GM10248 (cell line): ENCODE measurements at regions of chr11 and their contacts with region 1.

Region 1: GRCh38 chr11:94183886-94184264 is 55.2 kb downstream of the PANX1 start:
- DNase-seq: peak; percentile 23
- CTCF ChIP-seq: peak; percentile 67

Region 2: GRCh38 chr11:94171693-94172440 is 12.0 kb before region 1 on chr11:
- CTCF ChIA-PET with region 1: interaction called, 56 read pairs
- POLR2A ChIA-PET with region 1: no interaction called
- DNase-seq: peak; percentile 46
- CTCF ChIP-seq: peak; percentile 82

Region 3: DNA sequence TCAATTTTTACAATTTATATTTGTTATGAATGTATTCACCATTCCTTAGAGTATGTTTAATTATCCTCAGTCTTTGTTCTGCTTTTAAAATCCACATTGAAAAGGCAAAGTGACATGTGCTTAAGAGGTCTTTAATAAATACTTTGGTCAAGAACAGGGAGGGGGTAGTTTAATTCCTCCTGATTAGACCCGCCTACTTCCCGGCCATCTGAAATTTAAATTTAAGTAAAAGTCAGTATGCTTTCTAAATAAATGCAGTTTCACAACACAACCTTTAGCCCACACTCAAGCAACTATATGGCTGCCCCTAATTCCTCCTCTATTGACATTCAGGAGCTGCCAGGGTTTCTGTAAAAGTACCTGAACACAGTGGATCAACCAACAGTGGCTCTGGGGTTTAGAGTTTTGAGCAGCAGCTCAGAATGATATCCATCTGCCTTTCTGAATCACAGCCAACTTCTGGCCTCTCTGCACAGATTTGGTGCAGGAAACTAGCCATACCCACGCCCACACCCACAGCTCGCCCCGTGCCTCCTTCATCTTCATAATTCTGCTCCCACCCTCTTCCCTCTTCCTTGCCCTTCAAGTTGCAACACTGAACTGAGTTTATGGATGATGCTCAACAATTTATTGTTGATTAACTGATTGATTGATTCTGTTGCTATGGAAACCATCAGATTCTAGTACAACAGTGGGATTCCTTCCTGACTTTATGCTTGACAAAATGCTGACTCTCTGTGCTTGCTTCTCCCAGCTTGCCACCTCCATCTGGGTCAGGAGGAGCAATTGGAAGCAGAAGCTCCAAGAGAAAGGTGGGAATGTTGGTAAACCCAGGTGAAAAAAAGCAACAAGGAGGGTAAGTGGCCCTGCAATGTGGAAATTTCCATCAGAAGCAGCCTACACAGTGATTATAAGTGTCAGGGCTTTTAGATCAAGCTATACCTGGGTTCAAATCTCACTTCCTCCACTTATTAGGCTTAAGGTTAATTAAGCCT is 15.6 kb after region 1 on chr11:
- CTCF ChIA-PET with region 1: interaction called, 27 read pairs
- POLR2A ChIA-PET with region 1: no interaction called
- DNase-seq: no peak
- CTCF ChIP-seq: no peak

Region 4: GRCh38 chr11:94211261-94211830 is 27.5 kb after region 1 on chr11:
- CTCF ChIA-PET with region 1: interaction called, 12 read pairs
- POLR2A ChIA-PET with region 1: no interaction called
- DNase-seq: no peak
- CTCF ChIP-seq: no peak

Region 5: DNA sequence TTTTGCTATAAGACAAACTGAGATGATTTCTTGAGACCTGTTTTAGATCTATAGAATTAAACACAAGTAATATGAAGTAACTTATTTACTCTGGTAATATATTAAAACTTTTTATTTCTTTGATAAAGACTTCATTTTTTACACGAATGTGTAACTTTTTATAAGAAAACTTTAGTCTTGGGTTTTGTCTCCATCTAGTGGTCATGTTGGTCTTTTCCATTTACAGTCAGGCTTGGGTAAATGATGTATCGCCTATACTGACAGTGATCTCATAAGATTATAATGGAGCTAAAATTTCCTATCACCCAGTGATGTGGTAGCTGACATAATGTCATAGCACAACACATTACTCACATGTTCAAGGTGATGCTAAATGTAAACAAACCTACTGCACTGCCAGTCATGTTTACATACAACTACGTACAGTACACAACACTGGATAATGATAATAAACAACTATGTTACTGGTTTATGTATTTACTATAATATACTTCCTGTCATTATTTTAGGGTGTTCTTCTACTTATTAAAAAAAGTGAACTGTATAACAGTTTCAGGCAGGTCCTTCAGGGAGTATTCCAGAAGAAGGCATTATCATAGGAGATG is 320.9 kb after region 1 on chr11:
- CTCF ChIA-PET with region 1: interaction called, 36 read pairs
- POLR2A ChIA-PET with region 1: no interaction called
- DNase-seq: peak; percentile 52
- CTCF ChIP-seq: peak; percentile 54

Region 6: GRCh38 chr11:94519478-94520084 is 335.7 kb after region 1 on chr11:
- CTCF ChIA-PET with region 1: interaction called, 14 read pairs
- POLR2A ChIA-PET with region 1: no interaction called
- DNase-seq: peak; percentile 34
- CTCF ChIP-seq: peak; percentile 49